PC-3 (cell line): ENCODE measurements at regions of chr4 and their contacts with region 1.

Region 1: GRCh38 chr4:99054428-99054994 is 34.1 kb downstream of the ADH5 start:
- DNase-seq: no peak
- ATAC-seq: no peak
- H3K4me3 ChIP-seq: no peak overlapping the region
- H3K27ac ChIP-seq: no peak overlapping the region
- H3K4me1 ChIP-seq: peaks cover 14% of the 10 kb centered on the region
- H3K27me3 ChIP-seq: no peaks in the 10 kb centered on the region
- CTCF ChIP-seq: no peak

Region 2: DNA sequence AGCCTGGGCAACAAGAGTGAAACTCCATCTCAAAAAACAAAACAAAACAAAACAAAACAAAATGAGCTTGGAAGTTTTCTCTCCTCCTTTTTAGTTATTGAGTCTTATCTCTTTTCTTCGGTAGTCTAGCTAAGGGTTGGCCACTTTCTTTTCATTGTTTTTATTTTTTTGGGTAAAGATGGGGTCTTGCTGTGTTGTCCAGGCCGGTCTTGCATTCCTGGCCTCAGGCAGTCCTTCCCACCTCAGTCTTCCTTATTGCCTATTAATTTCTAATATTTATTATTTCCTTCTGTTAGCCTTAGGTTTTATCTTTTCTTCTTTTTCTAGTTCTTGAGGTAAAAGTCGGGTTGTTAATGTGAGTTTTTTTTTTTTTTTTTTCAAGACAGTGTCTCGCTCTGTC is 42.6 kb before region 1 on chr4:
- CTCF ChIA-PET with region 1: interaction called, 10 read pairs
- POLR2A ChIA-PET with region 1: no interaction called
- intact Hi-C with region 1: no loop called
- DNase-seq: no peak
- ATAC-seq: no peak
- H3K4me3 ChIP-seq: no peak overlapping the region
- H3K27ac ChIP-seq: no peak overlapping the region
- H3K4me1 ChIP-seq: no peaks in the 10 kb centered on the region
- H3K27me3 ChIP-seq: no peaks in the 10 kb centered on the region
- CTCF ChIP-seq: no peak

Region 3: GRCh38 chr4:99180382-99181070 is 126.0 kb after region 1 on chr4:
- CTCF ChIA-PET with region 1: no interaction called
- POLR2A ChIA-PET with region 1: no interaction called
- intact Hi-C with region 1: no loop called
- DNase-seq: peak; percentile 68
- ATAC-seq: no peak
- H3K4me3 ChIP-seq: no peak overlapping the region
- H3K27ac ChIP-seq: no peak overlapping the region
- H3K4me1 ChIP-seq: no peaks in the 10 kb centered on the region
- H3K27me3 ChIP-seq: no peaks in the 10 kb centered on the region
- CTCF ChIP-seq: no peak

Region 4: DNA sequence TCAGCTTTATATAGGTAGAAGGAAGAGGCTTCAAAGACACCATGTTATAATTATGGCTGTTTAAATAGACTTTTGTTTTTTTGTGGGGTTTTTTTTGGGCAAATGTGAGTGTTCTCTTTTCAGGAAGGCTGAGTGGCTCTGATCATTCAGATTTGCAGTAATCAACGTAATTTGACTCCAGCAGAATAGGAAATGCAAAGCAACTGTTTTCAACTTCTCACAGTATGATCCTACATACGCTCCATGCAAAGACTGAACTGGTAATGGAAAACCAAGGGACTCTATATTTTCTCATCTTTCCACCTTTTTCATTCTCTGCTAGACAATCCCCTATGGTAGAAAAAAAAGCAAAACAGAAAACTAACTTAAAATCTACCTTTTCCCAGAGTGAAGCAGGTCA is 255.9 kb after region 1 on chr4:
- CTCF ChIA-PET with region 1: no interaction called
- POLR2A ChIA-PET with region 1: no interaction called
- intact Hi-C with region 1: no loop called
- DNase-seq: no peak
- ATAC-seq: no peak
- H3K4me3 ChIP-seq: no peak overlapping the region
- H3K27ac ChIP-seq: no peak overlapping the region
- H3K4me1 ChIP-seq: no peaks in the 10 kb centered on the region
- H3K27me3 ChIP-seq: peaks cover 3% of the 10 kb centered on the region
- CTCF ChIP-seq: no peak